Left lung (tissue), 14 donors: ENCODE measurements at regions of chr14 and their contacts with region 1.

Region 1: GRCh38 chr14:94689218-94689984 is 77.2 kb downstream of the SERPINA3 start:
- DNase-seq: peak; percentile 41 to 86 (median 66)
- ATAC-seq: peak; percentile 98
- H3K4me3 ChIP-seq: no peak overlapping the region
- H3K27ac ChIP-seq: no peak overlapping the region
- H3K4me1 ChIP-seq: peaks cover 0 to 5% of the 10 kb centered on the region in 2 donors
- H3K27me3 ChIP-seq: peaks cover 0 to 35% of the 10 kb centered on the region in 2 donors
- CTCF ChIP-seq: peak; percentile 87 to 94

Region 2: DNA sequence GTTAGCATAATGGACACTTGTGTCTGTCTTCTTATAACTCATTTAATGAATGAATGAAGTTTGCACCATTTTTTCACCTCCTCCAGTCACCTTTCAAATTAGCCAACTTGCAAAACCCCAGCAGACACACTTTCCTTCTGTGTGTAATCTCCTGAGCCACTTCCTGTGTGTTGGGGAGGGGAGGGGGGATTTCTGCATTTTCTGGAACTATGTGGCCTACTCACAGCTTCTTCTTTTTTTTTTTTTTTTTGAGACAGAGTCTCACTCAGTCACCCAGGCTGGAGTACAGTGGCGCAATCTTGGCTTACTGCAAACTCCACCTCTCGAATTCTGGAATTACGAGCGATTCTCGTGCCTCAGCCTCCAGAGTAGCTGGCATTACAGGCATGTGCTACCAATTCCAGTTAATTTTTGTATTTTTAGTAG is 296.9 kb before region 1 on chr14:
- intact Hi-C with region 1: no loop called
- DNase-seq: peak in 2 of 4 donors; percentile 24 to 85
- ATAC-seq: peak; percentile 39
- H3K4me3 ChIP-seq: no peak overlapping the region
- H3K27ac ChIP-seq: peak overlapping the region; percentile 89 to 93
- H3K4me1 ChIP-seq: peaks cover 5 to 77% of the 10 kb centered on the region in 2 donors
- H3K27me3 ChIP-seq: no peaks in the 10 kb centered on the region
- CTCF ChIP-seq: no peak

Region 3: GRCh38 chr14:94992046-94992445 is 302.6 kb after region 1 on chr14:
- intact Hi-C with region 1: no loop called
- DNase-seq: no peak
- ATAC-seq: no peak
- H3K4me3 ChIP-seq: no peak overlapping the region
- H3K27ac ChIP-seq: no peak overlapping the region
- H3K4me1 ChIP-seq: no peaks in the 10 kb centered on the region
- H3K27me3 ChIP-seq: peaks cover 0 to 17% of the 10 kb centered on the region in 2 donors
- CTCF ChIP-seq: no peak

Region 4: GRCh38 chr14:95431199-95432143 is 742.1 kb after region 1 on chr14:
- intact Hi-C with region 1: loop called in 1 of 2 experiments (anchors 10 kb)
- DNase-seq: peak in 1 of 4 donors; percentile 30
- ATAC-seq: peak; percentile 59
- H3K4me3 ChIP-seq: no peak overlapping the region
- H3K27ac ChIP-seq: no peak overlapping the region
- H3K4me1 ChIP-seq: no peaks in the 10 kb centered on the region
- H3K27me3 ChIP-seq: no peaks in the 10 kb centered on the region
- CTCF ChIP-seq: peak in 1 of 2 donors; percentile 41

Region 5: GRCh38 chr14:95452176-95452892 is 762.9 kb after region 1 on chr14:
- intact Hi-C with region 1: no loop called
- DNase-seq: no peak
- ATAC-seq: peak; percentile 55
- H3K4me3 ChIP-seq: no peak overlapping the region
- H3K27ac ChIP-seq: no peak overlapping the region
- H3K4me1 ChIP-seq: no peaks in the 10 kb centered on the region
- H3K27me3 ChIP-seq: no peaks in the 10 kb centered on the region
- CTCF ChIP-seq: peak in 1 of 2 donors; percentile 10

Region 6: GRCh38 chr14:95472819-95473251 is 783.4 kb after region 1 on chr14:
- intact Hi-C with region 1: no loop called
- DNase-seq: peak in 1 of 4 donors; percentile 64
- ATAC-seq: peak; percentile 27
- H3K4me3 ChIP-seq: no peak overlapping the region
- H3K27ac ChIP-seq: no peak overlapping the region
- H3K4me1 ChIP-seq: peaks cover 3 to 9% of the 10 kb centered on the region in 2 donors
- H3K27me3 ChIP-seq: no peaks in the 10 kb centered on the region
- CTCF ChIP-seq: no peak